GM10248 (cell line): ENCODE measurements at regions of chr5 and their contacts with region 1.

Region 1: DNA sequence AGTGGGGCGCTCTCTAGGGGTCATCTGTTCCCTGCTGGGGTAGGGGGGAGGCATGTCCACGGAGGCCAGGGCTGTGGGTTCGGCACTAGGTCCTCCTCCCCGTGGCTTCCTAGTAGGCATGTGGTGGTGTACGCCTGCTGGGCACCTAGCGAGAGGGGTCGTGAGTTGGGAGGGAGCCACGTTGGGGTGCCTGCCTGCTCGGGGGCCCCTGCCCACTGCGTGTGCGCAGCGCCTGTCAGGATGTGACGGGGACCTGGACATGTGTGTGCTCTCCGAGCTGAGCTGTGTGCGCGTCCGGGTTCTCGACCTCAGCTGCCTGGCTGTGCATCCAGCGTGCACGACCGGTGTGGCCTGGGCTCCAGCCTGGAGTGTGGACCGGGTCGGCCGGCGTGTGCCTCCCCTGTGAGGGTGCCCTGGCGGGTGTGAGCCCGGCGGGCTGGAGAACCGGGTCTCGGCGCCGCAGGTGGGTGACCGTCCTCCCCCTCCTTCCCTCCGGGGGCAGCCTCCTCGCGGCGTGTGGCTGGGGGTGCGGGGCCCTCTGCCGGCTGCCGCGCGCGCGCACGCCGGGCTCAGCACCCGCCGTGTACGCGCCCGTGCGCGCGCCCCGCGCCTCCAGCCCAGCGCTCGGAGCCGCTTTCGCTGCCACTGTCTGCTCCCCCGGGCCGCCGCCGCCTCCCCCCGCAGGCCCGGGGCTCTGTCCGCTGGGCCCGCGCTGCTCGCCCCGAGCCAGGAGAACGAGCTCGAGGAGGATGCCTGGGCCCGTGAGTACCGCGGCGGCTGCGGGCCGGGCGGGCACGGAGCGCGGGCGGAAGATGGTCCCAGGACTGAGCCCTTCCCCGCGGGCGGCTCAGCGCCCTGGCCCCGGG is at the start of gene PRR7:
- DNase-seq: peak; percentile 86
- CTCF ChIP-seq: peak; percentile 21

Region 2: GRCh38 chr5:177425801-177426565 is 20.4 kb before region 1 on chr5:
- CTCF ChIA-PET with region 1: interaction called, 103 read pairs
- POLR2A ChIA-PET with region 1: interaction called, 11 read pairs
- DNase-seq: peak; percentile 97
- CTCF ChIP-seq: no peak

Region 3: DNA sequence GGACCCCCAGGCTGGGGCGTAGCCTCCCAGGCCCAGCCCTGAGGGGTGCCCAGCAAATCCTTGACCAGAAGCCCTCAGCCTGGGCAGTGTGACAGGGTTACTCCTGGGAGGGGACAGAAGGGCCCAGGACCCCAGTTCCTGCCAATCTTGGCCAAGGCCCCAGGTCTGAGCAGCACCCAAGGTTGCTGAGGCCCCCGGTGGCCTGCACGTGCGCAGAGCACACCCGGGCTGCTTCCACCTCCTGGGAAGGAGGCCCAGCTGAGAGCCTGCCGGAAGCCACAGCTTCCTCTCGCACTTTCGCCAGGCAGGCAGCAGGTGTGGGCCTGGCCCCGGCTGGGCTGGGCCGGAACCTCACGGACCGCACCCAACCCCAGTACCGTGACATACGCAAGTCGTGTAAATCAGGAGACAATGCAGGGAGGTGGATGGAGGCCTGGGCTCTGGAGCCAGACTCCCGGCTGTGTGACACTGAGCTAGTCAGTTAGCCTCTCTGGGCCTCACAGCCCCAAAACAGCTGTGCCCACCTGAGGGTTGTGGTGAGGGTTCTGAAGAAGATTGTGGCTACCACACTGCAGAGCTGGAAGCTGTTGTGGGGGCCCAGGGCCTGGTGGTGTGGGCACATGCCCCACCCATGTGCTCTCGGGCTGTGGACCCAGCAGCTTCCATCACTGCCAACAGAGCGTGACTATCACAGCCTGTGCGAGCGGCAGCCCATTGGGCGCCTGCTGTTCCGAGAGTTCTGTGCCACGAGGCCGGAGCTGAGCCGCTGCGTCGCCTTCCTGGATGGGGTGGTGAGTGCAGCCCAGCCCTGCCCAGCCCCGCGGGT is 14.9 kb before region 1 on chr5:
- CTCF ChIA-PET with region 1: interaction called, 163 read pairs
- POLR2A ChIA-PET with region 1: interaction called, 11 read pairs
- DNase-seq: peak; percentile 59
- CTCF ChIP-seq: no peak

Region 4: DNA sequence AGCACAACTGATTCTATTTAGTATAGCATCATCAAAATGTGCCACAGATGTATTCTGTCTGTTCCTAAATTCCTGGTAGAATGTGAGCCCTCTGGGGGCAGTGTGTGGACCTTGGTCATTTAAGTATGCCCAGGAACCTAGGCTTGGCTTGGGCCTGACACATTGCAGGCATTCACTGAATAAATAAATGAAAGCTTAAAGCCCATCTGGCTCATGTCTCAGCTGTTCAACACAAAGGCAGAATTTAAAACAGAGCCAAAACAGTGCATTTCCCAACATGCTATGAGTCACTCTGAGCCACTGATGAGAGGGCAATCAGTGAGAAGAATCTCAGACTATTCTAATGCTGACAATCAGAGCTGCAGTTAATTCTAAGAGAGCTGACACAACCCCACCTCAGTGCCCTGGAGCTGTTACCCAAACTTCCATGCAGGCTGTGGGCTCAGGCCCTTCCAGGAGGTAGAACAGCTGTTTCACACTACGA is 99.9 kb after region 1 on chr5:
- CTCF ChIA-PET with region 1: no interaction called
- POLR2A ChIA-PET with region 1: no interaction called
- DNase-seq: no peak
- CTCF ChIP-seq: no peak